Lower leg skin (tissue), 4 donors: ENCODE measurements at regions of chr1 and their contacts with region 1.

Region 1: GRCh38 chr1:157269656-157270375 is 131.6 kb upstream of the ETV3 start:
- DNase-seq: no peak
- H3K4me3 ChIP-seq: no peak overlapping the region
- CTCF ChIP-seq: no peak
- POLR2A ChIP-seq: no peak

Region 2: DNA sequence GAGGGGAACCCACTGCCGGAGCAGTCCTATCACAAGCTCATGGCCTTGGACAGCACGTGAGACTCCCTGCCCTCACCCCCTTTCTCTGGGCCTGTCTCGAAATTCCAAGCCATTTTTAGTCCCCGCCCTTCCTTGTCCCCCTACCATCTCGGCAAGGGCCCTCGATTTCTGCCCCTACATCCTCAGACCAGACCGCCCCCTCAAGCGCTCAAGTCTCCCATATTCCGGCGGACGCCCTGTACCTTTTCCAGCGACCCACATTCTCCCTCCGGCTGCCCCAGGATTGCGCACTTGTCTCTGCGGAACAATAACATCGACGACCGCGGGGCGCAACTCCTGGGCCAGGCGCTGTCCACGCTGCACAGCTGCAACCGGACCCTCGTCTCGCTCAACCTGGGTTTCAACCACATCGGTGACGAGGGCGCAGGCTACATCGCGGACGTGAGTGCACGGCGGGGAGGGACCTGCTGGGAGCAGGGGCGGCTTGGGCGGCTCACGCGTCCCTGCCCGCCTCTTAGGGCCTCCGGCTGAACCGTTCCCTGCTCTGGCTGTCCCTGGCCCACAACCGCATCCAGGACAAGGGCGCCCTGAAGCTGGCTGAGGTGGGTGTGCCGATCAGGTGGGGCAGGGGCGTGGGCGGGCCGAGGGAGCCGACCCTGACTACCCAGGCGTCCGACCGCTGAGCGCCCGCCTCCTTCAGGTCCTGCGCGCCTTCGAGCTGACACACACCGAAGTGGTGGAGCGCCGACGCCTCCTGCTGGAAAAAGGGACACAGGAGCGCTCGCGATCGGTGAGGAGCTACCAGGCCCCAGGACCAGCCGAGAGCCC is 342.4 kb before region 1 on chr1:
- intact Hi-C with region 1: no loop called
- DNase-seq: peak in 1 of 2 donors; percentile 47
- H3K4me3 ChIP-seq: no peak overlapping the region
- CTCF ChIP-seq: no peak
- POLR2A ChIP-seq: no peak

Region 3: GRCh38 chr1:157325220-157325619 is 55.4 kb after region 1 on chr1:
- intact Hi-C with region 1: loop called (anchors 10 kb)
- DNase-seq: no peak
- H3K4me3 ChIP-seq: no peak overlapping the region
- CTCF ChIP-seq: no peak
- POLR2A ChIP-seq: no peak